IMR-90 (cell line): ENCODE measurements at regions of chrX and their contacts with region 1.

Region 1: DNA sequence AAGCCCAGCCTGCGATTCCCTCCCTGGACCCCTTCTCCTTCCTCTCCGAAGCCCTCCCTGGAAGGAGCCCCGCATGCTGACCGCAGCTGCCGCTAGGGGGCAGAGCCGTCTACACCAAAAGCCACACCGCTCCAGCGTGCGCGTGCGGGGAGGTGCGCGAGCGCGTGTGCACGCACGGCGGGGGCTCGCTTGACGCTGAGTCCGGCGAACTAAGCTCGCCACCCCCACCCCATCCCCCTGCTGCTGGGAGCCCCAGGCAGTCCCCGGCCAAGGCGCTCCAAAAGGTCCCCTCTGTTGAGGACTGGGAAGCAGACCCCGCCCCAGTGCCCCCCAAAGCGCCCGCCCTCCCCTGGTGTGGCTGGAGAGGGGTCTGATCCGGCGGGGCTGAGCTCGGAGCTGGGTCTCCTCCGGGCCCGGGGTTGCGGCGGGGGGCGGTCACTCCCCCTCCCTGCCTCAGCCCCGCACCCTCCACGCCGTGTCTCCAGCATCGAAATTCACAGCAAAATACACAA is 11.0 kb upstream of the CCNQ start:
- DNase-seq: peak; percentile 65
- ATAC-seq: peak; percentile 90
- H3K4me3 ChIP-seq: peak overlapping the region; percentile 24; the same call in 1 of the 2 replicates
- H3K27ac ChIP-seq: no peak overlapping the region
- H3K4me1 ChIP-seq: no peaks in the 10 kb centered on the region
- H3K27me3 ChIP-seq: peaks cover 16% of the 10 kb centered on the region
- CTCF ChIP-seq: peak; percentile 69
- POLR2A ChIP-seq: no peak
- RAD21 ChIP-seq: peak; percentile 59

Region 2: GRCh38 chrX:153411255-153411987 is 198.6 kb before region 1 on chrX and contains the start of gene ZFP92:
- CTCF ChIA-PET with region 1: no interaction called
- POLR2A ChIA-PET with region 1: no interaction called
- dilution Hi-C with region 1: no loop called
- in situ Hi-C with region 1: no loop called
- intact Hi-C with region 1: no loop called
- DNase-seq: no peak
- ATAC-seq: peak; percentile 44; the same call in 1 of the 2 replicates
- H3K4me3 ChIP-seq: peak within 1 kb of the TSS; percentile 34
- H3K27ac ChIP-seq: no peak within 1 kb of the TSS
- H3K4me1 ChIP-seq: no peaks in the 10 kb centered on the region
- H3K27me3 ChIP-seq: peaks cover 9% of the 10 kb centered on the region
- CTCF ChIP-seq: no peak
- POLR2A ChIP-seq: no peak
- RAD21 ChIP-seq: no peak
- total RNA-seq, gene ZFP92: under 0.01 TPM in 2 replicates

Region 3: GRCh38 chrX:153628133-153629059 is 18.4 kb after region 1 on chrX:
- CTCF ChIA-PET with region 1: no interaction called
- POLR2A ChIA-PET with region 1: no interaction called
- dilution Hi-C with region 1: no loop called
- in situ Hi-C with region 1: no loop called
- intact Hi-C with region 1: loop called (anchors 1 kb)
- DNase-seq: no peak
- ATAC-seq: no peak
- H3K4me3 ChIP-seq: no peak overlapping the region
- H3K27ac ChIP-seq: no peak overlapping the region
- H3K4me1 ChIP-seq: no peaks in the 10 kb centered on the region
- H3K27me3 ChIP-seq: peaks cover 26% of the 10 kb centered on the region
- CTCF ChIP-seq: no peak
- POLR2A ChIP-seq: no peak
- RAD21 ChIP-seq: no peak

Region 4: DNA sequence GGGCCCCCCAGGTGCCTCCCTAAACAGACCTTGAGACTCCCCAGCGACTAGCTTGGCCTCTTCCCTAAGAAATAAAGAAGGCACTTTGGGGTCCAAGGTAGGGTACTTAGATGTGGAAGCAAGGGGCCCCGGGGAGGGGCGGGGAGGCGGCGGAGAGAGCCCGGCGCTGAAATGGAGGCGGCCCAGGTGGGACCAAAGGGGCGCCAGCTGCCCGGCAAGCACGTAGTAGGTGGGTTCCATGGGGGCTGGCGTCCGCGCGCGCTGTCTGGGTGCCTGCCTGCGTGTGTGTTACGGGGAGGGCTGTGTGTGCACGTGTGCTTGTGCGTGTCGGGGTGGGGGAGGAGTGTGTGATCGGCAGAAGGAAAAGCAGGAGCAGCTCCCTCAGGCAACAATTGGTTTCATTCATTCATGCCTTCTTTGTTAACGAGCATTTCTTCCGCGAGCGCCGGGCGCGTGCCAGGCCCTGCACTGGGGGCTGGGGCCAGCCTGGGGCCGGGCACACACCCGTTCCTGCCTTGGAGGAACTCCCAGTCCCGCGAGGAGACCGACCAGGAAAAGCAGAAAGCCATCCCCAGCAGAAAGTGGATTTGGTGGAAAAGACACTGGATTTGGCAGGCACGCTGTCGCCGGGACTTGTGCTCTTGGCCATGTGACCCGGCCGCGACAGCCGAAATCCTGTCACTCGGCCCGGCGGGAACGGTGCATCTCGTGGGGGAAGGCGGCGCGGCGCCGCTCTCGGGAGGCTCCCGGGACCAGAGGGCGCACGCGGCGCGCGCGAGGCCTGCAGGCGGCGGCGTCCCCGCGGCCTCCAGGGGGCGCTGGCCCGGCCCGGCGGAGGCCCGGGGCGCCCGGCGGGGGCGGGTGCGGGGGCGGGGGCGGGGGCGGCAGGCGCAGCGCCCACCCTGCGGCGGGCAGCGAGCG is 33.7 kb after region 1 on chrX:
- CTCF ChIA-PET with region 1: interaction called, 3 read pairs
- POLR2A ChIA-PET with region 1: no interaction called
- dilution Hi-C with region 1: no loop called
- in situ Hi-C with region 1: no loop called
- intact Hi-C with region 1: loop called (anchors 1 kb)
- DNase-seq: no peak
- ATAC-seq: peak; percentile 58
- H3K4me3 ChIP-seq: no peak overlapping the region
- H3K27ac ChIP-seq: no peak overlapping the region
- H3K4me1 ChIP-seq: no peaks in the 10 kb centered on the region
- H3K27me3 ChIP-seq: peaks cover 62% of the 10 kb centered on the region
- CTCF ChIP-seq: peak; percentile 33
- POLR2A ChIP-seq: no peak
- RAD21 ChIP-seq: no peak